AG04450 (cell line): ENCODE measurements at regions of chr12 and their contacts with region 1.

Region 1: DNA sequence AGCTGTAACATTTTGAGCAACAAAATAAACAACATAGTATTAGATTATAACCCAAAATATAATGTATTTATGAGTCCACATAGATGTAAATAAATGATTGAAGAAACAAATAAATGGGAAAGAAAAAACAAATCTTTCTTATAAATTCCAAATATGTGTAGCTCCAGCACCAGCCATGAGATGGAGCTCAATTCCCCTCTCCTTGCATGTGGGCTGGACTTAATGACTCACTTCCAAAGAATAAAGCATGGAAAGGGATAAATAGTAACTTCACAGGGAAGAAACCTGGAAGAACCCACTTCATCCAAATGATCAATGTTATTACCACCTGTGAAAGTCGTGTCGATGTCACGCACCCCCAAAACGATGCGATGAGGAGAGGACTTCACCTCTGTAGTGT is 158.7 kb downstream of the RPAP3 start:
- DNase-seq: peak; percentile 23
- H3K4me3 ChIP-seq: no peak overlapping the region
- H3K27ac ChIP-seq: no peak overlapping the region
- H3K27me3 ChIP-seq: peaks cover 8% of the 10 kb centered on the region
- CTCF ChIP-seq: peak; percentile 67

Region 2: GRCh38 chr12:47576289-47576945 is 29.3 kb after region 1 on chr12:
- CTCF ChIA-PET with region 1: no interaction called
- POLR2A ChIA-PET with region 1: no interaction called
- DNase-seq: no peak
- H3K4me3 ChIP-seq: no peak overlapping the region
- H3K27ac ChIP-seq: no peak overlapping the region
- H3K27me3 ChIP-seq: peaks cover 12% of the 10 kb centered on the region
- CTCF ChIP-seq: no peak

Region 3: GRCh38 chr12:47686645-47687240 is 139.7 kb after region 1 on chr12:
- CTCF ChIA-PET with region 1: interaction called, 30 read pairs
- POLR2A ChIA-PET with region 1: no interaction called
- DNase-seq: peak; percentile 26
- H3K4me3 ChIP-seq: no peak overlapping the region
- H3K27ac ChIP-seq: no peak overlapping the region
- H3K27me3 ChIP-seq: no peaks in the 10 kb centered on the region
- CTCF ChIP-seq: peak; percentile 84